Mammary epithelial cell (primary cell): ENCODE measurements at regions of chr22 and their contacts with region 1.

Region 1: DNA sequence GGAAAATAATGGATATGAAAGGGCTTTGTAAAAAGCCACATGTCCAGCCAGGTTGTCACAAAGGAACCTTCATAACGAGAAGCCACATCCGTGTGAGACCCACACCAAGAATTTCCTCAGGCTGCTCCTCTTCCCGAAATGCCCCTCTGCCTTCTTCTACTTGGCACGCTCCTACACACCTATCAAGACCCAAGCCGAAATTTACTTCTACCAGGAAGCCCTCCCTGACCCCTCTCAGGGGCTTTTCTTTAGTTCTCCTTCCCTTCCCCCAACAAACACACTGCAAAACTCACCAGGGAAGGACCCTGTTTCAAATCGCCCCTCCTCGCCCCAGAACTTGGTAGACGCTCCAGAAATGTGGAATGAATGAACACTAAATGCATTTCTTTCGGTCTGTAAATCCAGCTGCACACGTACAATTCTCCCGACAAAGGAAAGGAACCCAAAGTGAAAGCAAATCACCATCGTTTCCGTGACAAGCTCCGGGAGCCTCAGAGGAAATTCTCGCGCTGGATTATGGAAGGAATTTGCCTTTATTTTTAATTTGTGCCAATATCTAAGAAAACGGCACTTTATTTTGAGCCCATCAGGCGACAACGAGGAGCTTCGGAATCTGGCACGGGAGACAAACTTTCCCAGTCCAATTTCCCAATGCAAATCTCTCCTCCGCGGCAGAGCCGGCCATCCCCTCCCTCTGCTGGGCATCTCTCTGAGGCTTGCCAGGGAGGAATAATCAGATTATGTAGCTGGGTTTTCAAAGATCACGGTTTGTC is 13.2 kb upstream of the SHISAL1 start:
- DNase-seq: peak; percentile 31
- H3K4me3 ChIP-seq: peak overlapping the region; percentile 47 to 68 (median 56)
- H3K27ac ChIP-seq: no peak overlapping the region
- H3K4me1 ChIP-seq: peaks cover 10% of the 10 kb centered on the region
- H3K27me3 ChIP-seq: no peaks in the 10 kb centered on the region
- CTCF ChIP-seq: peak; percentile 10 to 45

Region 2: GRCh38 chr22:43945632-43946383 is 380.1 kb before region 1 on chr22:
- CTCF ChIA-PET with region 1: no interaction called
- dilution Hi-C with region 1: no loop called
- in situ Hi-C with region 1: no loop called
- intact Hi-C with region 1: no loop called
- DNase-seq: peak; percentile 36
- H3K4me3 ChIP-seq: no peak overlapping the region
- H3K27ac ChIP-seq: no peak overlapping the region
- H3K4me1 ChIP-seq: no peaks in the 10 kb centered on the region
- H3K27me3 ChIP-seq: no peaks in the 10 kb centered on the region
- CTCF ChIP-seq: peak; percentile 80 to 87

Region 3: GRCh38 chr22:43993027-43993760 is 332.7 kb before region 1 on chr22:
- CTCF ChIA-PET with region 1: no interaction called
- dilution Hi-C with region 1: no loop called
- in situ Hi-C with region 1: no loop called
- intact Hi-C with region 1: loop called (anchors 1 kb)
- DNase-seq: peak; percentile 11
- H3K4me3 ChIP-seq: no peak overlapping the region
- H3K27ac ChIP-seq: no peak overlapping the region
- H3K4me1 ChIP-seq: no peaks in the 10 kb centered on the region
- H3K27me3 ChIP-seq: no peaks in the 10 kb centered on the region
- CTCF ChIP-seq: peak; percentile 95 to 97